ENCODE measurements at regions of chr2 and their contacts with region 1.

Region 1: DNA sequence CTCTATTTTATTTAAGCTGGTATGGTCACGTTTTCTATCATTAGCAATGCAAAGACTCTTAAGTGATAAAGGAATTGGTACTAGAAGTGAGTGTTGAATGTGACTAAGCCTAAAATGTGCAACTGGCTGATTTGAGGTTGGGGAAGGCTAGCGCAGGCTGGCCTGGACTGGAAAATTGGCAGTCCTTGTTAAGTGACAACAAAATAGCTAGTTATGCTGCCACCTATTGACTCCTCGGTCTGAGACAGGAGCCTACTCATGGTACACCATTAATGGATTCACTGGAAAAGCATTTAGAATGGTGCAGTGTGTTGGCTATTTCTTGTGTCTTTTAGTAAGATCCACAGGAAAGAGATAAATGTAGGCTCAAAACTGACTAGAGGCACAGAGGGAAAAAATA is 5.7 kb upstream of the WIPF1 start:
- DNase-seq: peak in 1 of 2 donors; percentile 39
- ATAC-seq: peak in 1 of 2 donors; percentile 79
- H3K4me3 ChIP-seq: no peak overlapping the region
- H3K27ac ChIP-seq: no peak overlapping the region
- H3K4me1 ChIP-seq: peaks cover 0 to 4% of the 10 kb centered on the region in 2 donors
- H3K27me3 ChIP-seq: no peaks in the 10 kb centered on the region
- CTCF ChIP-seq: peak in 3 of 5 experiments; percentile 22 to 48 (median 45)
- POLR2A ChIP-seq: no peak

Region 2: DNA sequence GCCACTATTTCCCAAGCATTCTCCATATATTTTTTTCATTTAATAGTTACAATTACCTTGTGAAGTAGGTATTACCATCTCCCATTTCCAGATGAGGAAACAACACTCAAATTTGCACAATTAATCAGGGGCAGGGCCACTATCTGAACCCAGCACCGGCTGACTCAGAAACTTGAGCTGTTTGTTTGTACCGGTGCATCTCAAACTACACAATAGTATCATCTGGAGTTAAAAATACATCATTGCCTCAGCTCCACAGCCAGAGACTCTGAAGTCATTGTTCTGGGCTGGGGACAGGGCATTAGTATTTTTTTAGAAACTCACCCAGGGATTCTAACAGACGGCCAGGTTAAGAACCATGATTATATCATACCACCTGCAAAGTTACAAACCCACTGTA is 1192.7 kb before region 1 on chr2:
- in situ Hi-C with region 1: no loop called
- intact Hi-C with region 1: no loop called
- DNase-seq: peak; percentile 57 to 58
- ATAC-seq: peak; percentile 98
- H3K4me3 ChIP-seq: no peak overlapping the region
- H3K27ac ChIP-seq: peak overlapping the region; percentile 69 to 83 (median 76)
- H3K4me1 ChIP-seq: peaks cover 20 to 36% of the 10 kb centered on the region in 2 donors
- H3K27me3 ChIP-seq: no peaks in the 10 kb centered on the region
- CTCF ChIP-seq: no peak
- POLR2A ChIP-seq: no peak

Region 3: DNA sequence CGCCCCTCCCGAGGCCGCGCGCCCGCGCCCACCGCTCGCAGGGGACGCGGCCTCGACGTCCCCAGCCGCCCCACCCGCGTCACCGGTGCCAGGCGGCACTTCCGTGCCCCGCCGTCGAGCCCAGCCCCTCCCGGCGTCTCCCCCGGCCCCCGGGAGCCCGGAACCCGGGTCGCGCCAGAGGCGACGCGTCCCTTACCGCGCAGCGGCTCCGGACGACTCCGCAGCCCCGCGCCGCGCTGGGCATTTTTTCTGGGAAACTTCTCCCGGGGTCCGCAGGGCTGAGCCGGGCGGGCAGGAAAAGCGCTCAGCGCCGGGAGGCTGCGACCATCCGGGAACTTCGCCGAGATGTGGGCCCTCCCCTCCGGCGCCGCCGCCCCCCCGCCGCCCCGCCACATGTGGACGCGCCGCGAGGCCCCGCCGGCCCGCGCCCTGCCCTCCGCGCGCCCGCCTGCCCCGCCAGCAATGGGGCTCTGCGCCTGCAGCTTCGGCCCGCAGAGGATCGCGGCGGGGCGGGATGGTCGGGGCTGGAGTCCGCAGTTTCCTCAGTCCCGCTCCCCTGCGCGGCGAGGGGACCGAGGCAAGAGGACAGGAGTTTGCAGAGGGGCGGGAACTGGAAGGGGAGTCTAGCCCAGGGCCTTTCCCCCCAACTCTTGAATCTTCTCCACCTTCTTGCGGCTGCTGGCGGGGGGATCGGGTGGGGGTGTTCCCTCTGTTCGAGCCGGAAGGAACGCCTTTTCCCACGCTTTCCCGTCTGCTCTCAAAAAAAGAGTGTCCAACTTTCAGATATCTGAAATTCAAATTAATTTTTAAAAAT is 79.5 kb after region 1 on chr2:
- in situ Hi-C with region 1: no loop called
- intact Hi-C with region 1: loop called (anchors 10 kb)
- DNase-seq: peak in 1 of 2 donors; percentile 6
- ATAC-seq: peak; percentile 64 to 69
- H3K4me3 ChIP-seq: peak overlapping the region; percentile 64 to 91 (median 74)
- H3K27ac ChIP-seq: peak overlapping the region; percentile 63 to 79 (median 72)
- H3K4me1 ChIP-seq: peaks cover 5% of the 10 kb centered on the region in 2 donors
- H3K27me3 ChIP-seq: peaks cover 0 to 18% (median 15%) of the 10 kb centered on the region in 3 donors
- CTCF ChIP-seq: no peak
- POLR2A ChIP-seq: peak in 1 of 2 donors; percentile 12

Measured in gastrocnemius medialis (tissue), 4 donors.